ENCODE measurements at regions of chr4 and their contacts with region 1.

Region 1: GRCh38 chr4:41204400-41204978 is 9.9 kb downstream of the APBB2 start:
- DNase-seq: no peak
- H3K4me3 ChIP-seq: no peak overlapping the region
- H3K27ac ChIP-seq: no peak overlapping the region
- H3K4me1 ChIP-seq: peaks cover 0 to 5% (median 0%) of the 10 kb centered on the region in 4 experiments; a peak in 2 of 7 replicates
- H3K27me3 ChIP-seq: no peaks in the 10 kb centered on the region
- CTCF ChIP-seq: no peak
- EP300 ChIP-seq: no peak
- POLR2A ChIP-seq: no peak
- RAD21 ChIP-seq: no peak

Region 2: DNA sequence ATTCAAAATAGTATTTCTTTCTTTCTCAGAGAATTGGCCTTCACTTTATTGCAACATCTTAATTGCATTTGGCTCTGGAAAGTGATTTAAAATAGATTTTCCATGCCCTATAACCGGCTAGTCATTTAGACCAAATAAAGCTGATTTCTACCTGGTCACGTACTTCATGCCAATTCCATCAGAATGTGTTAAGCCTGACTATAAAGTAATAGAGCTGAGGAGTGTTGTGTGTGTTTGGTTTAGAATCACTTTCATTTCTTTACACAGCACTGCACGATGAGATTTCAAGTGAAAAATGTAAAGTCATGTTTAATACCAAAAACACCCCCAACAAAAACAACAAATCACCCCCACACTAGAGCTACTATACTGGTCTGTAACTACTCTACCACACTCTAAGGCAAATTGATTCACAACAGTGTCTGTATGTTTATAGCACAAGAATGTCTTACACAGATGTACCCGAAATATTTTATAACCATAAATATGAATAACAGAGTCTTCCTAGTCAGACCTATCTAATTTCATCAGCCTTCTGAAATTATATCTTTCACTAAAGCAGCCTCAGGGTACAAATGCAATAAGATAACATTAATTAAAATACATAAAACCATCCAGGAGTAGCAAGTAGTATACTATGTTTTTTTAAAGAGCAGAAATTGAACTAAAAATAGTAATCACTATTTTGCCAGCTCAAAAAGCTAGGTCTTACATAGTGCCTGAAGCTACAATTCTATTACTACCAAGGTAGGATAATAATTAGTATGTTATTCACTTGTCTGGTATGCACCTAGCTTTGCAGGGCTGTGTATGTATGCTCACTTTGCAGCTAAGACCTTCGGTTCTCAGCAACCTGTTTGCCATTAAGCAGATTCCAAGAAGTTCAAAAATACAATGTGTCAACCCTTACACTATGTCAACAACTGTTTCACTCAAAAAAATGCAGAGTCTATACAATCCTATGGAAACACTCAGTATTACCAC is 18.6 kb before region 1 on chr4:
- CTCF ChIA-PET with region 1: interaction called, 10 read pairs
- POLR2A ChIA-PET with region 1: interaction called, 3 read pairs
- DNase-seq: no peak
- H3K4me3 ChIP-seq: no peak overlapping the region
- H3K27ac ChIP-seq: no peak overlapping the region
- H3K4me1 ChIP-seq: peaks cover 0 to 5% (median 1%) of the 10 kb centered on the region in 4 experiments; a peak in 2 of 7 replicates
- H3K27me3 ChIP-seq: no peaks in the 10 kb centered on the region
- CTCF ChIP-seq: no peak
- EP300 ChIP-seq: no peak
- POLR2A ChIP-seq: no peak
- RAD21 ChIP-seq: no peak

Region 3: GRCh38 chr4:41232406-41232805 is 27.9 kb after region 1 on chr4:
- CTCF ChIA-PET with region 1: no interaction called
- POLR2A ChIA-PET with region 1: no interaction called
- DNase-seq: peak in 1 of 2 experiments; percentile 40
- H3K4me3 ChIP-seq: no peak overlapping the region
- H3K27ac ChIP-seq: no peak overlapping the region
- H3K4me1 ChIP-seq: no peaks in the 10 kb centered on the region
- H3K27me3 ChIP-seq: no peaks in the 10 kb centered on the region
- CTCF ChIP-seq: peak in 2 of 3 experiments; percentile 35 to 37; a peak in 3 of 4 replicates
- EP300 ChIP-seq: no peak
- POLR2A ChIP-seq: no peak
- RAD21 ChIP-seq: peak; percentile 51 to 68

Measured in H1 (cell line).